ENCODE measurements at regions of chr12 and their contacts with region 1.

Region 1: DNA sequence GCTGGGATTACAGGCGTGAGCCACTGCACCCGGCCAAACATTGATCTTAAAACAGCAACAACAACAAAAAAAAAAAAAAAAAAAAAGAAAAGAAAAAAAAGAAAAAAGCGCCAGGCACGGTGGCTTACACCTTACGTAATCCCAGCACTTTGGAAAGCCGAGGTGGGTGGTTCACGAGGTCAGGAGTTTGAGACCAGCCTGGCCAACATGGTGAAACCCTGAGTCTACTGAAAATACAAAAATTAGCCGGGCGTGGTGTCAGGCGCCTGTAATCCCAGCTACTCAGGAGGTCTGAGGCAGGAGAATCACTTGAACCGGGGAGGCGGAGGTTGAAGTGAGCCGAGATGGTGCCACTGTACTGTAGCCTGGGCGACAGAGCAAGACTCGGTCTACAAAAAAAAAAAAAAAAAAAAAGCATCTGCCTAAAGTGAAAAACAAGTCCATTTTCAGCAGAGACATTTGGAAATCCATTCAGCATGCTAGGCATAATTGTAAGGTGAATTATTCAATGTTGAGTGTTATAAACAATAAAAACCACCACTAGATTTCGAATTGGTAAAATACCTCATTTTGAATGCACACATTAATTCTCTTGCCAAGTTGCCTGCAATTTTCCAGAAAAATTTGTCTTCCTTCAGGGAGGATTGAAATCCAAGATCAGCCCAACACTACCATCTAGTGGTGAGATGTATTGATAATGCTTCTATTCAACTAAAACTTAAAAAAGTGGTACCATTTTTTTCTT is 8.0 kb upstream of the CERS5 start:
- DNase-seq: no peak
- H3K4me3 Mint-ChIP-seq: no peak overlapping the region
- H3K27ac Mint-ChIP-seq: no peak overlapping the region
- H3K4me1 Mint-ChIP-seq: no peaks in the 10 kb centered on the region
- H3K27me3 Mint-ChIP-seq: no peaks in the 10 kb centered on the region

Region 2: DNA sequence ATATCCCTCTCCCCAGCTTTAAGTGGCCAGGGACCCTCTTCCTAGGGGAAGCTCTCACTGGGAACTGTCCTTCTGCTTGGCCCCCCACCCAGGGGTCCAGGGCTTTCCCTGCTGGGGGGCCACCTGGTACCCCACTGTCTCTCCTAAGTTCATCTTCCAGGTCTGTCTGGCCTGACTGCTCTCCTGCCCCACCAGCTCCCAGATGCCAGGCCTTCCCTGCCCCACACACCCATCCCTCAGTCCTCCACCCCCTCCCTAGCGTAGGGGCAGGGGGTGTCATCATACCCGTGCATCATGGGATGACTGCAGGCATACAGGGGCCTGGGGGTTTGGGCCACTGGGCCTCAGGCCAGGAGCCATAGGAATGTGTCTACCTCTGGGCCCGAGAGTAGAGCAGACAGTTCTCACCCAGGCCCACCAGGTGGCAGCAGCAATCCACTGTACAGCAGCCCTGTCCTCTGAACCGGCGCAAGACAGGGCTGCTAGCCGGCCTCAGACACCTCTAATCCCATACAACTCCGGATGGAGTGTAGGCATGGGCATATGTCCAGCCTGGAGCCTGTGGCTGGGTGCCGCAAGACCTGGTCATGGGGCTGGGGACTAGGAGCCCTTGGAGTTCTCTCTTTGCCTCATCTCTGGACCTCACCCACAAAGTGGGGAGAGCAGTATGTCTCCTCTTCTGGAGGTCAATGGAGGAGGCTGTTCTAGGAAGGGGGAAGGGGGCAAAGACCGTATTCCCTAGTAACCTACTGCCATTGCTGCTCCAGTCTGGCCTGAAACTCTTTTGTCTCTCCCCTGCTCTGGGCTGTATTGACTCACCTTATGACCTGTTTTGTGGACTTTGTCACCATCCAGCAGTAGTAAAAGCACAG is 100.0 kb before region 1 on chr12:
- CTCF ChIA-PET with region 1: interaction called, 19 read pairs
- POLR2A ChIA-PET with region 1: no interaction called
- intact Hi-C with region 1: no loop called
- DNase-seq: peak; percentile 87
- H3K4me3 Mint-ChIP-seq: no peak overlapping the region
- H3K27ac Mint-ChIP-seq: no peak overlapping the region
- H3K4me1 Mint-ChIP-seq: peaks cover 7% of the 10 kb centered on the region
- H3K27me3 Mint-ChIP-seq: no peaks in the 10 kb centered on the region

Region 3: GRCh38 chr12:50157259-50157658 is 17.9 kb before region 1 on chr12:
- CTCF ChIA-PET with region 1: interaction called, 11 read pairs
- POLR2A ChIA-PET with region 1: no interaction called
- intact Hi-C with region 1: no loop called
- DNase-seq: no peak
- H3K4me3 Mint-ChIP-seq: no peak overlapping the region
- H3K27ac Mint-ChIP-seq: peak overlapping the region; percentile 64
- H3K4me1 Mint-ChIP-seq: peaks cover 34% of the 10 kb centered on the region
- H3K27me3 Mint-ChIP-seq: no peaks in the 10 kb centered on the region

Region 4: DNA sequence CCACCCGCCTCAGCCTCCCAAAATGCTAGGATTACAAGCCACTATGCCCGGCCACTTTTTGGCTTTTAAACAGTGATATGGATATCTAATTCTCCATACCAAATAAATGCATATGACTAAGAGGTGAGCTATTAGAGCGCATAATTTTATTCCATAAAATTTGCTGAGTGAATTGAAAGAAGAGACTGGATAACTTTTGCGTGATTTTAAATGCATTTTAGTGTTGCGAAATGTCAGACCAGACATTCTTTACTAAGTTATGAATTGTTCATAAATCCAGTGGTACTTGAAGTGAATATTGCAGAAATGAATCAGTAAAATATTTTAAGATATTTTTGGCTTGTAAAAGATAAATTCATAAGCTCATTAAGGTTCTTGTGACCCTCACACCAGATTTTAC is 278.7 kb after region 1 on chr12:
- CTCF ChIA-PET with region 1: no interaction called
- POLR2A ChIA-PET with region 1: no interaction called
- intact Hi-C with region 1: no loop called
- DNase-seq: no peak
- H3K4me3 Mint-ChIP-seq: no peak overlapping the region
- H3K27ac Mint-ChIP-seq: no peak overlapping the region
- H3K4me1 Mint-ChIP-seq: peaks cover 4% of the 10 kb centered on the region
- H3K27me3 Mint-ChIP-seq: no peaks in the 10 kb centered on the region

Measured in activated CD4-positive, alpha-beta memory T cell treated with anti-CD3 and anti-CD28 coated beads for 36 hours (primary cell).